Right cardiac atrium (tissue), 5 donors: ENCODE measurements at regions of chr9 and their contacts with region 1.

Region 1: DNA sequence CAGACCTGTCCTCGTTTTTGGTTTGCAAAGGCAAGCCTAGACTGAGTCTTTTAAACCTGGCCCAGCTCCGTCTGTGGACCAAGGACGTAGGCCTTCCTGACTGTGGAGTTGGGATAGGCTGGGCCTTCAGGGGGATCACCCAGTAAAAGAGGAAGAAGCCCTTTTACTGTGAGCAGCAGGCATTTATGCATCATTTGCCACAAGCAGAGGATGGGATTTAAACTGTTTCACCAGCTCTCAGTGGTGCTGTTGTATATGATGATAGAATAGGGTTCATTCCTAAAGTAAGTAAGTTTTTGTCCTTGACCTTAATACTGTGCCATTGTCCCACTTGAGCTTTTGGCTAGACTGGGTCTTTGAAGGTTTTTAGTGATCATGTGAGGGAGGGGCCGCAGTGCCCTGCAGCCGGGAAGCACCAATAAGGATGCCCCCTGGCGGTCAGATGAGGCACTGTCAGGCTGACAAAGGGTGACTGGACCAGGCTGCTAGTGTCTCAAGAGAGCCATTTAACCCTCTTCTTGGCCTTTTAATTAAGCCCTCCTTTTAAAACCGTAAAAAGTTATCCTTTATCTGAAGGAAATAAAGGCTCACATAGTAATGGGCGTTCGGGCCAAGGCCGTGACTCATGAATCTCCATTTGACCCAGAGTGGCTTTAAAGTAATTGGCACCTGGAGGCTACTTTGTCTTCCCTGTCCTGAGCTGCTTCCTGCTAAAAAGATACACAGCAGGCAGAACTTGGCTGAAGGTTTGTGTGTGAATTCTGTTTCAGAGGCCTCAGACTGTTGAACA is 74.0 kb downstream of the UBAP1 start:
- DNase-seq: peak; percentile 69 to 83 (median 81)
- ATAC-seq: peak; percentile 37 to 71
- H3K4me3 ChIP-seq: no peak overlapping the region
- H3K27ac ChIP-seq: peak overlapping the region; percentile 88
- H3K4me1 ChIP-seq: peaks cover 27% of the 10 kb centered on the region
- H3K27me3 ChIP-seq: no peaks in the 10 kb centered on the region

Region 2: GRCh38 chr9:34010979-34011378 is 241.9 kb before region 1 on chr9:
- intact Hi-C with region 1: loop called in 1 of 4 experiments (anchors 10 kb)
- DNase-seq: no peak
- ATAC-seq: no peak
- H3K4me3 ChIP-seq: no peak overlapping the region
- H3K27ac ChIP-seq: no peak overlapping the region
- H3K4me1 ChIP-seq: no peaks in the 10 kb centered on the region
- H3K27me3 ChIP-seq: no peaks in the 10 kb centered on the region

Region 3: GRCh38 chr9:34126207-34127034 is 126.4 kb before region 1 on chr9 and contains the start of gene DCAF12:
- intact Hi-C with region 1: loop called in 1 of 4 experiments (anchors 10 kb)
- DNase-seq: peak; percentile 92 to 97 (median 96)
- ATAC-seq: peak; percentile 97 to 99
- H3K4me3 ChIP-seq: peak within 1 kb of the TSS; percentile 87
- H3K27ac ChIP-seq: peak within 1 kb of the TSS; percentile 94
- H3K4me1 ChIP-seq: peaks cover 4% of the 10 kb centered on the region
- H3K27me3 ChIP-seq: no peaks in the 10 kb centered on the region
- total RNA-seq, gene DCAF12: 12.0 to 17.1 (median 15.5) TPM

Region 4: DNA sequence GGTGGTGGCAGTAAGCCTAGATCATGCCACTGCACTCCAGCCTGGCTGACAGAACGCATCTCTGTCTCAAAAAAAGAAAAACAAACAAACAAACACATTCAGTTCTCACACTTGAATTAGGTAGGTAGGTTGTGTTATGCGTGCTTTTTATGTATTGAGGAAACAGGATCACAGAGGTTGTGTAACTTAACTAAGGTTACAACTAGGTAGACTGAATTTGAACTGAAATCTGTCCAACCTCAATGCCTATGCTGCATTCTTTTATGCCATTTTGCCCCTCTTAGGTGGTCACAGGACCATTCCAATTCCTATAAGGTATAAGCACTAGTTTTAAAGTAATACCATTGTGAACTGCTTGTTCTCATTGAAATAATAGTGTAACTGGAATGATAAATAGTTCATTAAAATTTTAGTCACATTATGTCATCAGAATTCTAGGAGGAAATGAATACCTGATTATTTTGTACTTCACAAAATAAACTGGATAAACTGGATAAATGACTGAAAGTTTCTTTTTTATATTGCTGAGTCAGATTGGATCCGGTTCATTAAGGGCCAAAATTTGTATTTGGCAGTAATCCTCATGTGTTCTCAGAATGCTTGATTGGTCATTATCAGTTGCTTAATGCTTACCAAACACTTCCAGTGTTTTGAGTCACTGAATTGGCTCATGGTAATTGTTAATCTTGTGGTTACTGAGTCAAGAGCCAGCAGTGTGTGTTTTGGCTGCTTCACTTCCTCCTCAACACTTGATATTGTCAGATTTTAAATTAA is 66.9 kb before region 1 on chr9:
- intact Hi-C with region 1: loop called in 1 of 4 experiments (anchors 10 kb)
- DNase-seq: peak in 2 of 3 donors; percentile 39 to 79
- ATAC-seq: peak; percentile 95 to 97
- H3K4me3 ChIP-seq: no peak overlapping the region
- H3K27ac ChIP-seq: no peak overlapping the region
- H3K4me1 ChIP-seq: peaks cover 5% of the 10 kb centered on the region
- H3K27me3 ChIP-seq: no peaks in the 10 kb centered on the region